Caco-2 (cell line): ENCODE measurements at regions of chr5 and their contacts with region 1.

Region 1: GRCh38 chr5:80255732-80256479 is at the start of gene SERINC5:
- DNase-seq: peak; percentile 85
- H3K4me3 ChIP-seq: peak within 1 kb of the TSS; percentile 84
- H3K4me3 Mint-ChIP-seq: peak within 1 kb of the TSS; percentile 91
- H3K27ac Mint-ChIP-seq: peak within 1 kb of the TSS; percentile 86
- H3K4me1 ChIP-seq: peaks cover 44% of the 10 kb centered on the region
- H3K4me1 Mint-ChIP-seq: peaks cover 33% of the 10 kb centered on the region
- H3K27me3 ChIP-seq: no peaks in the 10 kb centered on the region
- H3K27me3 Mint-ChIP-seq: no peaks in the 10 kb centered on the region
- CTCF ChIP-seq: no peak
- total RNA-seq, gene SERINC5: 225 and 226 TPM in 2 replicates

Region 2: DNA sequence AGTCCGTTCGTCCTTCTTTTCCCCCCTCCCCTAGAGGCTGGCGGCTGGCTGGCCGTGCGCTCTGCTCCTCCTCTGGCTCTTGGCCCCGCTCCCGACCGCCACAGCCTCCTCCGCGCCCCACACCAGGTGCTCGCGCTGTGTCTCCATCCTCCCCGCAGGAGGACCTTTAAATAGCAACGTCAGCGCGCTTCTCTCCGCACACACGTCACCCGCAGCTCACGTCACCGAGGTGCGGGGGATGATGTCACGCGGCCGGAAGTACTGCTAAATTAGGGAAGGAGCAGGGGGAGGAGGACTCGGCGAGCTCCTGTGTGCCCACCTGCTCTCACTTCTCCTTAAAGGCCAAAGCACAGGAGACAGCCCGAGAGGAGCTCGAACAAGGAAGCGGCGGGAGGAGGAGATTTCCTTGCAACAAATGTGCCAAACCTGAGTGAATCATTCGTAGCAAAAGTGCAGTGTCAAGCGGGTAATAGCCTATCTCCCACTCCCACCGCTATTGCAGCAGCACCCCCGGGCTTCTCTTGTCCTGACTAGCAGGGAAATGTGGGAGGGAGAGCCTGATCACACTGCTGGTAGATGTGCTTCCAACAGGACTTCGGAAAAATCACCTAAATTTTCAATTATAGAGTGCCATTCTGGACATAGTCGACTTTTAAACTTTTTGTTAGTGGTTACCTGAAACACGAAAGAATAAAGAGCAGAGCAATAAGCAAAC is 741.4 kb before region 1 on chr5:
- CTCF ChIA-PET with region 1: no interaction called
- POLR2A ChIA-PET with region 1: interaction called, 13 read pairs
- intact Hi-C with region 1: no loop called
- DNase-seq: peak; percentile 93 to 96
- H3K4me3 ChIP-seq: peak overlapping the region; percentile 93
- H3K4me3 Mint-ChIP-seq: peak overlapping the region; percentile 85
- H3K27ac Mint-ChIP-seq: peak overlapping the region; percentile 91
- H3K4me1 ChIP-seq: peaks cover 18% of the 10 kb centered on the region; the same call in 1 of the 2 replicates
- H3K4me1 Mint-ChIP-seq: peaks cover 10% of the 10 kb centered on the region
- H3K27me3 ChIP-seq: no peaks in the 10 kb centered on the region
- H3K27me3 Mint-ChIP-seq: no peaks in the 10 kb centered on the region
- CTCF ChIP-seq: no peak

Region 3: DNA sequence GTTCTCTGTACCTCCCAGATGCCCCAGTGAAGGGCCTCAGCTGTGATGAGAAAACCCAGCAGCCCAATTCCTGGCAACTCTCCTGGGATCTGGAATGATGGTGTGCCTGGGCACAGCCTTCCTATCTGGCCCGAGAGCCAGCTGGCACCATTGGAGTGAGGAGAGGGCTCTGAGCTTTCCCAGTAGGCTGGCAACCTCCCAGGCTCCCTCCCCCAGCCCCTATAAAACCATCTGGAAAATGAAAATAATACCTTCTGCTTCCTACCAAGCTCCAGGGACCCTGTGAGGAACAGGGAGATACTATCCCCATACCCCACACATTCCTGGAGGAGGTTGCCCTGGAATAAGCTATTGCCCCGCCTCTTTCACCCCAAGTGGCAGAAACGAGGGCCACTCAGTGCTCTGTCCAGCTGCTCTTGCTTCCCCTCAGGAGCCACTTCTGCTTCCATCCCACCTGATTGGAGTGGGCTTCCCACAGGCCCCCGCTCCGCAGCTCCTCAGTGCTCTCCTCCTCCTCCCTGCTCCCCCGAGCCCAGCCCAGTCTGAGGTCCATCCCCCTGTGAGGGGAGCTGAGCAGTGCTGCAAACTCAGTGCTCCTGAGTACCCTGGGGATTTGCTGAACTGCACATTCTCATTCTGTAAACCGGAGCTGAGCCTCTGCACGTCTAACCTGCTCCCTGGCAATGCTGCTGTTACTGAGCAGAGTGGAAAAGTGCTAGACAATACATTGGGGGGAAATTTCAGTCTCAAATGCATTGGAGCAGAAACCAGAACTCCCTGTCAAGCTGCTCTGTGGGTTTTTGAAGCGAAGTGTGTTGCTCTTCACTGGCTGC is 146.0 kb before region 1 on chr5:
- CTCF ChIA-PET with region 1: no interaction called
- POLR2A ChIA-PET with region 1: interaction called, 3 read pairs
- intact Hi-C with region 1: loop called (anchors 1 kb)
- DNase-seq: no peak
- H3K4me3 ChIP-seq: no peak overlapping the region
- H3K4me3 Mint-ChIP-seq: peak overlapping the region; percentile 12
- H3K27ac Mint-ChIP-seq: peak overlapping the region; percentile 91
- H3K4me1 ChIP-seq: peaks cover 52% of the 10 kb centered on the region
- H3K4me1 Mint-ChIP-seq: peaks cover 83% of the 10 kb centered on the region
- H3K27me3 ChIP-seq: no peaks in the 10 kb centered on the region
- H3K27me3 Mint-ChIP-seq: no peaks in the 10 kb centered on the region
- CTCF ChIP-seq: no peak

Region 4: DNA sequence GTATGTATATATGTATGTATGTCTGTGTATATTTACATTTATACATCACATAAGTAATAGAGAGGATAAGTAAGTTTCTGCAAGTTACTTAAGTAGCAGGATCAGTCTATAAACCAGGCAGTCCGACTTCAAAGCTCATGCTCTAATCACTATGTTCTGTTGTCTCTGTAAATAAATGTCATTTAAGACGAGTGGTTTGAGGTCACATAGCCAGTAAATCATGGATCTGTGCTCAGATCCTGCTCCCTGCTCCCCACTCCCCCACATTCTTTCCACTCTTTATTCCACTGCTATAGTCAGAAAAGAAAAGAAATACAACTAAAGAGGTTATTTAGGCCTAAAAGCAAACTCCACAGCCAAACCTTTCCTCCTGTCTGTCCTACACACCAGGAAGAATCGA is 90.5 kb before region 1 on chr5:
- CTCF ChIA-PET with region 1: interaction called, 5 read pairs
- POLR2A ChIA-PET with region 1: interaction called, 4 read pairs
- intact Hi-C with region 1: loop called (anchors 5 kb)
- DNase-seq: peak; percentile 60 to 64
- H3K4me3 ChIP-seq: no peak overlapping the region
- H3K4me3 Mint-ChIP-seq: peak overlapping the region; percentile 27
- H3K27ac Mint-ChIP-seq: peak overlapping the region; percentile 70
- H3K4me1 ChIP-seq: peaks cover 47% of the 10 kb centered on the region
- H3K4me1 Mint-ChIP-seq: peaks cover 66% of the 10 kb centered on the region
- H3K27me3 ChIP-seq: no peaks in the 10 kb centered on the region
- H3K27me3 Mint-ChIP-seq: no peaks in the 10 kb centered on the region
- CTCF ChIP-seq: no peak

Region 5: GRCh38 chr5:80229902-80230255 is 26.0 kb before region 1 on chr5:
- CTCF ChIA-PET with region 1: no interaction called
- POLR2A ChIA-PET with region 1: no interaction called
- intact Hi-C with region 1: loop called (anchors 2 kb)
- DNase-seq: no peak
- H3K4me3 ChIP-seq: no peak overlapping the region
- H3K4me3 Mint-ChIP-seq: no peak overlapping the region
- H3K27ac Mint-ChIP-seq: peak overlapping the region; percentile 18
- H3K4me1 ChIP-seq: peaks cover 22% of the 10 kb centered on the region
- H3K4me1 Mint-ChIP-seq: peaks cover 42% of the 10 kb centered on the region
- H3K27me3 ChIP-seq: no peaks in the 10 kb centered on the region
- H3K27me3 Mint-ChIP-seq: no peaks in the 10 kb centered on the region
- CTCF ChIP-seq: no peak